HepG2 (cell line): ENCODE measurements at regions of chr4 and their contacts with region 1.

Region 1: DNA sequence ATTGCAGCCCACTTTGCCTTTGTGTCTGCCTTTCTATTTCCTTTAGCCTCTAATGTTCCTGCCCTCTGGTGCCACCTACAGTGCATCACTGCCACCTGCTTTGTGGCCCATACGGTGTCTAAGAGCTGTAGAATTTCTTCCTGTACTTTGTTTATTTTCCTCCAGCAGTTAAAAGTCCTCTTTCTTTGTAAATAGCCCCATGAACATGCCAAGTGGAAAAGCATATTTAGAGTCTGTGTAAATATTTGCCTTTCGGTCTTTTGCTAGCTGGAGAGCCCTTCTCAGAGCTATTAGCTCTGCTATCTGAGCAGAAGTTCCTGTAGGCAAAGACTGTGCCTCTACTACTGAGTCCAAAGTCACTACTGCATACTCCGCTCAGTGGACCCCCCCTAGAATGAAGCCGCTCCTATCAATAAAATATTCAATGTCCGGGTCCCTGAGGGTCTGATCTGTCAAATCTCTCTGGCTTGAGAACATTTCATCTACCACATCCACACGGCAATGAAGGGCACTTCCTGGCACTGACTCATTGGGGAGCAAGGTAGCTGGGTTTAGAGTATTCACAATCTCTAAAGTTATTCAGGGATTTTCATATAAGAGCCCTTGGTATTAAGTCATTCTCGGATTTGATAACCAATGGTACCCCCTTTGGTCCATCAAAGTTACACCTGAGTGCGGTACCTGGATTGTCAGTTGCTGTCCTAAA is 36.3 kb downstream of the SULT1E1 start:
- DNase-seq: peak; percentile 98
- ATAC-seq: peak; percentile 98
- H3K4me3 ChIP-seq: 0 out of 6 replicates have a peak overlapping the region, but pooled peaks of 1 of the 3 experiments have one; percentile 4
- H3K27ac ChIP-seq: peak overlapping the region; percentile 80
- H3K4me1 ChIP-seq: peaks cover 60% of the 10 kb centered on the region
- H3K27me3 ChIP-seq: no peaks in the 10 kb centered on the region
- CTCF ChIP-seq: peak; percentile 93
- EP300 ChIP-seq: peak in 1 of 2 experiments; percentile 99; a peak in 3 of 4 replicates
- POLR2A ChIP-seq: no peak
- RAD21 ChIP-seq: peak; percentile 91; the same call in 1 of the 2 replicates

Region 2: DNA sequence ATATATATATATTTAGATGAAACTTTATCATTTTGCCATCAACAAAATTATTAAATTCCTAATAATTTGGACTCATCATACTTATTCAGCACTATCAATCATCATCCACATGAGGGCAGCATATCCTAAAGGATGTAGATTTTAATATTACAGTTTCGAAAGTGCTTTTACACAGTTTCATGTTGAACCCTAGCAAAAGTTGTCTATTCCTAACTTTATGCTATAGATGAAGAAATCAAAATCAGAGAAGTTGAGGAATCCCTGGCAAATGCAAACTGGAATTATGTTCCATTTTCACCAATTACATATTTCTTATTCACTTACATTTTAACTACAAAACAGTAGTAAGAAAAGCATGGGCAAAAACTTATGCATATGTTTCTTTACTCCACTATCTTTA is 134.0 kb before region 1 on chr4:
- CTCF ChIA-PET with region 1: interaction called, 20 read pairs
- POLR2A ChIA-PET with region 1: interaction called, 7 read pairs
- in situ Hi-C with region 1: loop called (anchors 5 kb)
- intact Hi-C with region 1: loop called (anchors 1 kb)
- DNase-seq: peak; percentile 66
- ATAC-seq: no peak
- H3K4me3 ChIP-seq: no peak overlapping the region
- H3K27ac ChIP-seq: peak overlapping the region; percentile 2
- H3K4me1 ChIP-seq: peaks cover 19% of the 10 kb centered on the region
- H3K27me3 ChIP-seq: no peaks in the 10 kb centered on the region
- CTCF ChIP-seq: peak; percentile 71
- EP300 ChIP-seq: no peak
- POLR2A ChIP-seq: no peak
- RAD21 ChIP-seq: peak; percentile 82

Region 3: DNA sequence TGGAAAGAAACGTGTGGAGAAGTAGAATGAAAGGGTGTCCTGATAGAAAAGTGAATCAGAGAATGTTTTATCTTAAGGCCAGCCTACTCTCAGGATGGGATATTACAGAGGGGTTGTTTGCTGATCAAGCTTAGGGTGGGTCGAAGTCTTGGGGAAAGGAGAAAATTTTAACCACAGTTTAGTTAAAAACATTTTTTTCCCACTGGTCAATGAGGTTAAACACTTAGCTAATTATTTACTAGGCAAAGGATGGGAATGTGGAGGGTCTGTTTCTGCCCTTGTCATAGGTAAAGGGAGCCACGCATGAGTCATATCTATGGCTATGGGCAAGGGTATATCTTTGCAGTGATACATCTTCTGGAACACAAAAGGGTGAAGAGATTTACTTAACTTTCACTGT is 52.4 kb after region 1 on chr4:
- CTCF ChIA-PET with region 1: interaction called, 11 read pairs
- POLR2A ChIA-PET with region 1: interaction called, 10 read pairs
- in situ Hi-C with region 1: loop called (anchors 5 kb)
- intact Hi-C with region 1: loop called (anchors 1 kb)
- DNase-seq: peak; percentile 52
- ATAC-seq: peak; percentile 86
- H3K4me3 ChIP-seq: no peak overlapping the region
- H3K27ac ChIP-seq: peak overlapping the region; percentile 34
- H3K4me1 ChIP-seq: peaks cover 51% of the 10 kb centered on the region
- H3K27me3 ChIP-seq: no peaks in the 10 kb centered on the region
- CTCF ChIP-seq: no peak
- EP300 ChIP-seq: peak in 1 of 2 experiments; percentile 38; a peak in 1 of 4 replicates
- POLR2A ChIP-seq: no peak
- RAD21 ChIP-seq: no peak

Region 4: DNA sequence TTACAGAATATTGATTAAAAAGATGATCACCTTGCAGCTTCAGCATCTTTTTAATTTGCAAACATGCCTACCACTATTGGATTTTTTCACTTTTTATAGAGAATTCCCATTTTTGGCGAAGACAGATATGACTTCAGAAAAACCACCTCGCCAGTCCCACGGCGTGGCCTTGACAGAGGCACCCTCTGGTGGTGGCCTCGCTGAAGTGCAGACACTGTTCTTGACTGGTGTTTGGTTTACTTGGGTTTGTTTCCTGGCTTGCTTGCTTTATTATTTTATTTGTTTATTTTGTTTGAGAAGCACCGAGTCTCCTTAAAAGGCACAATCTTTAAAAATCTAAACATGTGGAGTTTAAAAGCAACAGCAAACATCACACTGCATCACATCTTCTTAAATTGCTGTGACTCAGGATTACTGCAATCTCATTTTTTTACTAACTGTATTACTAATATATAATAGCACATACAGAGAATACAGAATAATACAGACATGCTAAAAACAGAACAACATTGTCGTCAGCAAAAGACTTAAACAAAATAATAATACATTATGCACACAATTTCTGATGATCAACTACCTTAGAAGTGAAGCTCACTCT is 681.6 kb after region 1 on chr4:
- CTCF ChIA-PET with region 1: no interaction called
- POLR2A ChIA-PET with region 1: no interaction called
- in situ Hi-C with region 1: no loop called
- intact Hi-C with region 1: loop called (anchors 1 kb)
- DNase-seq: peak; percentile 38
- ATAC-seq: peak; percentile 85
- H3K4me3 ChIP-seq: no peak overlapping the region
- H3K27ac ChIP-seq: no peak overlapping the region
- H3K4me1 ChIP-seq: no peaks in the 10 kb centered on the region
- H3K27me3 ChIP-seq: no peaks in the 10 kb centered on the region
- CTCF ChIP-seq: peak; percentile 86
- EP300 ChIP-seq: no peak
- POLR2A ChIP-seq: no peak
- RAD21 ChIP-seq: peak; percentile 84